SK-N-SH (cell line): ENCODE measurements at regions of chr10 and their contacts with region 1.

Region 1: DNA sequence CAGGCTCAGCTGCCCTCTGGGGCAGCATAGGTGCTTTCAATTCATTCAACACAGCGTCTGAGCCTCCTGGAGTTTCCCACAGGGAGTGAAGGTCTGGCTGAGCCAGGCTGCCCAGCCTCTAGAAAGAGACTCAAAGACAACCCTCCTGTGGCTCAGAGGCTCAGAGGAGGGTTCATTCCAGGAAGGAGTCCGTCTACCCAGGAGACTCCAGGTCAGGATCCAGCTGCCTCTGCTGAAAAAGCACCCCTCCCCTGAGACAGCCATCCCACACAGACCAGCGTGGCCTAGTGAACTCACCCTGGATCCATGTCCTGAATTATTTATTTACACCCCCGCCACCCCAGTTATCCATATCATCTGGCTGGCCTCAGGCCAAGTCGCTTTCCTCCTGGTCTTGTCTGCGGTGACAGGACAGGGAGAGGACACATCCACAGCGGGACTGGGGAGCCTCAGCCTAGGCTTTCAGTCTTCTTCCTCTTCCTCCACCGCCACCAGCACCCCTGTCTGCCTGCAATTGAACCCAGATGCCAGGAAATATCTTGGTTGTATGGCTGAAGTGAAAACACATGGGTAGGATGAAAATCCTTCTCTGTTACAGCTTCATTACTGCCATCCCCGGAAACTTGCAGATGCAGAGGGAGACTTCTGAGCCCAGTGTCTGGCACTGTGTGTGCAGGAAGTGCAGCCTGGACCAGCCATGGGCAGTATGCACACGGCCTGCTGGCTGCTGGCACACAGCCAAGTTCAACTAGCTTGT is 44.0 kb upstream of the COL13A1 start:
- DNase-seq: peak; percentile 82
- H3K4me3 ChIP-seq: peak overlapping the region in 1 of 2 experiments; percentile 7; a peak in 1 of 4 replicates
- H3K27ac ChIP-seq: peak overlapping the region; percentile 71 to 99
- H3K4me1 ChIP-seq: peaks cover 14 to 46% of the 10 kb centered on the region in 2 experiments
- H3K27me3 ChIP-seq: no peaks in the 10 kb centered on the region
- CTCF ChIP-seq: no peak
- EP300 ChIP-seq: no peak; a peak in 1 of 4 replicates
- RAD21 ChIP-seq: peak; percentile 22; the same call in 1 of the 2 replicates

Region 2: DNA sequence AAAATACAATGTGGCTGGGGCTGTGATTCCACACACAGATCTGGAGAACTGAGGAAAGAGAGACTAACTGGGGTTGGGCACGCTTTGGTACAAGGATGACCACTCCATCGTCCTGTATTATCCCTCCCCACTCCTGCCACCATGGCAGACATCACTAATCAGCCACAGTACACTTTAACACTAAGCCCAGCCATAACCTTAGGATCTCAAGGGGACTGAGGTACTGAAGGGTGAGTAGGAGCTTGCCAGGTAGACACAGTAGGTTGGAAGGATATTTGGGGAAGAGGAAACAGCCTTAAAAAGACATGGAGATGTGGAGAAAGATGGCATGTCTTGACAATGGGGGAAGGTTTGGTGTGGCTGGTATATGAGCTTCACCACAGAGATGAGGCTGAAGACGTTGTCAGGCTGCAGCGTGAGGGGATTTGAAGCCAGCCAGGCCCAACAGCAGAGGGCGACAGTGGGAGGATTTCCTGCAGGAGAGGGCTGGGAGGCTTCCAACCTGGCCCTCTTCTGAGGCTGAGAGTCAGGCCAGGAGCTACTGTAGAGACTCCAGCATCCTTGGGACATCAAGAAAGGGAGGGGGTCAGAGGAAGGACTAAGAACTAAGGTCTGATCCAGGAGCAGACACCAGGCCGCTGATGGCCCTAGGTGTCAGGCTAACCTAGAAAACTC is 14.7 kb before region 1 on chr10:
- CTCF ChIA-PET with region 1: interaction called, 10 read pairs
- POLR2A ChIA-PET with region 1: no interaction called
- DNase-seq: peak; percentile 64
- H3K4me3 ChIP-seq: no peak overlapping the region
- H3K27ac ChIP-seq: no peak overlapping the region
- H3K4me1 ChIP-seq: peaks cover 0 to 4% of the 10 kb centered on the region in 2 experiments; a peak in 1 of 4 replicates
- H3K27me3 ChIP-seq: peaks cover 7% of the 10 kb centered on the region; the same call in 1 of the 2 replicates
- CTCF ChIP-seq: peak; percentile 64
- EP300 ChIP-seq: no peak
- RAD21 ChIP-seq: peak; percentile 69